ENCODE measurements at regions of chr11 and their contacts with region 1.

Region 1: DNA sequence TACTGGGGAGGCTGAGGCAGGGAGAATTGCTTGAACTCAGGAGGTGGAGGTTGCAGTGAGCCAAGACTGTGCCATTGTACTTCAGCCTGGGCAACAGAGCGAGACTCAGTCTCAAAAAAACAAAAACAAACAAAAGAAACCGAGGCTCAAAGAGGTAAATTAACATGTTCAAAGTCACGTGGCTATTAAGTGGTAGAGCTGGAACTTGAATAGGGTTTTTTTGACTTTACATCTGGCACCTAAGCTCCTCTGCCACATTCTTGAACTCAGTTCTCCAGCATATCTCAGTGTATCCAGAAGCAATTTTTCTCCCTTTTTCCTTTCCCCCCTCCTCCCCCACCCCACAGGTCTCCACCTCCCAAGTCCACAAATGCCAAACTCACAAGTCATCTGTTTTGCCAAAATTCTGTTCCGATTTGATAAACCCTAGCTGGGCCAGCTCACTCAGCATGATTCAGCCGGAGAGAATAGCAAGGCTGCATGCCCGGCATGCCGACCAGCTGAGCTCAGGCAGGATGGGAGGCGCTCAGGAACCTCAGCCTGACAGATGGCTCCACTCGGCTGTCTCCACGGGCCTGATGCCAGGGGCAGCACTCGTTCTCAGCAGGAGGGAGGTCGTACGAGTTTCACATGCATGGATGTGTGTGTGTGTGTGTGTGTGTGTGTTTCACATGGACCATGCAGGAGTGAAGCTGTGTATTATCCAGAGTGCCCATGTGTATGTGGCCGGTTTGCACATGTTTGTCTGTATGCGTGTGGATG is 63.2 kb upstream of the RRAS2 start:
- H3K4me3 ChIP-seq: peak overlapping the region; percentile 5; the same call in 1 of the 2 replicates
- H3K27ac ChIP-seq: no peak overlapping the region
- H3K4me1 ChIP-seq: no peaks in the 10 kb centered on the region
- CTCF ChIP-seq: no peak

Region 2: DNA sequence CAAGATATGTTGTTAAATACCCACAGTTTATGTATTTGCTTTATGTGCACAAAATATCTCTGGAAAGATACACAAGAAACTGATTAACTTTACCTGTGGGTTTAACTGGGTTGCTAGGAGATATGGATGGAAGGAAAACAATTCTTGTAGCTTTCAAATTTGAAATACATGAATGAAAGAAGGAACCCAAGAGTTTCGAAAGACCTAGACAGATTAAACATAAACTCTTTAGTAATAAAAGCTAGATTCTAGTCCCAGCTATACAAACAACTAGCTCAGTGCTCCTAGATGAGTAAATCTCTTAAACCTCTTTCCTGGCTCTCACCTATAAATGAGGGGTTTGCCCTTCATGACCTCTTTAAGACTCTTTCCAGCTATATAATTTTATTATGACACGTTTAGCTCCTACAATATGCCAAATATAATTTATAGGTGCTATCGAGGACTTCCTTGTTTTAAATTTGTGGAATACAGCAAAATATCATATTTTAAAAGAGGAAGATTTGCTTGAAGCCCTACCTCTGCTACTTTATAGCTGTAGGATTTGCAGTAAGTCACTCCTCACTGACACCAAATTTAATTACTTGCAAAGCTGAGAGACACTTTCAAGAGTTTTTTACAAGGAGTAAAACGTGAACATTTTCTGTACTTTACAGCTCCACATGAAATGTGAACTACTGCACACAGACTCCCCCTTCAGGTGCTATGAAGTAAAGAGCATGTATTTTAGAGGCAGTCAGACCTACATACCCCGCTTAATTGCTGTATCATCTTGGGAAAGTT is 113.9 kb before region 1 on chr11:
- CTCF ChIA-PET with region 1: interaction called, 99 read pairs
- POLR2A ChIA-PET with region 1: interaction called, 11 read pairs
- H3K4me3 ChIP-seq: no peak overlapping the region
- H3K27ac ChIP-seq: no peak overlapping the region
- H3K4me1 ChIP-seq: no peaks in the 10 kb centered on the region
- CTCF ChIP-seq: no peak

Region 3: DNA sequence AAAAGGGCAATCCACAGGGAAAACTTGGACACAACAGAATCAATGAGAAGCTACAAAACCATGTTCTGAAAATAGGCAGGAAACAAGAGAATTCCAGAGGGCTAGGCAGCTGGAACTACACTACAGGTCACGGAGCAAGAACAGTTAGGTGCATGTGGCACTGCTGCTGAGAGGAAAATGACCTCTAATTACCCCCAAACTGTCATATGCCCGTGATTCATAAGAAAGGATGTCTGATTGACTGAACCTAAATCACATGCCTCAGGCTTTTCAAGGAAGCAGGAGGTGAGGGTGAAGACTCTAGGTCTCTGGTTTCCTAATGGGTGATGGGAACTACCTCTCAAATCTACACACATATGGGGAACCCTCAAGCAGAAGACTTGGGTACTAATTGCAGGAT is 45.3 kb before region 1 on chr11:
- CTCF ChIA-PET with region 1: interaction called, 18 read pairs
- POLR2A ChIA-PET with region 1: interaction called, 3 read pairs
- H3K4me3 ChIP-seq: no peak overlapping the region
- H3K27ac ChIP-seq: no peak overlapping the region
- H3K4me1 ChIP-seq: 0 out of 2 replicates have a peak, but pooled peaks cover 2% of the 10 kb centered on the region
- CTCF ChIP-seq: no peak

Region 4: DNA sequence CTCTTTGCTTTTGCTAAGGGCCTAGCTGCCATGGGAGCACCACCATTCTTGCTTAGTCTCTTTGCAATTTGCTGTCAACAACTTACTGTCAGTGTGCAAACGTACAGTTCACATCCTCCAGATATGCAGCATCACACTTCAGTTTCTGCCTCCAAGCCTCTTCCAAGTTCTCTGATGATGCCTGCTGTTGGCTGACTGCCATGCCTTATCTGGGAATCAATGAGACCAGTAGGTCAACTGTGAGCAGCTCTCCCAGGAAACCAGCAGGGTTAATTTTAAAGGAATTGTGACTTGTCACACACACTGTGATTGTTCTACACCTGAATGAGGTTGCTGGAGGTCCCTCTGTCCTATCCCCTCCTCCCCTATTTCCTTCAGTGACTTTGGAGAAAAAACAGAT is 21.4 kb after region 1 on chr11:
- CTCF ChIA-PET with region 1: interaction called, 13 read pairs
- POLR2A ChIA-PET with region 1: interaction called, 5 read pairs
- H3K4me3 ChIP-seq: no peak overlapping the region
- H3K27ac ChIP-seq: no peak overlapping the region
- H3K4me1 ChIP-seq: no peaks in the 10 kb centered on the region
- CTCF ChIP-seq: no peak

Region 5: GRCh38 chr11:14722496-14722895 is 300.3 kb after region 1 on chr11:
- CTCF ChIA-PET with region 1: no interaction called
- POLR2A ChIA-PET with region 1: no interaction called
- H3K4me3 ChIP-seq: no peak overlapping the region
- H3K27ac ChIP-seq: no peak overlapping the region
- H3K4me1 ChIP-seq: 0 out of 2 replicates have a peak, but pooled peaks cover under 1% of the 10 kb centered on the region
- CTCF ChIP-seq: no peak

Measured in HEK293 (cell line).